CD8-positive, alpha-beta T cell (primary cell): ENCODE measurements at regions of chr4 and their contacts with region 1.

Region 1: DNA sequence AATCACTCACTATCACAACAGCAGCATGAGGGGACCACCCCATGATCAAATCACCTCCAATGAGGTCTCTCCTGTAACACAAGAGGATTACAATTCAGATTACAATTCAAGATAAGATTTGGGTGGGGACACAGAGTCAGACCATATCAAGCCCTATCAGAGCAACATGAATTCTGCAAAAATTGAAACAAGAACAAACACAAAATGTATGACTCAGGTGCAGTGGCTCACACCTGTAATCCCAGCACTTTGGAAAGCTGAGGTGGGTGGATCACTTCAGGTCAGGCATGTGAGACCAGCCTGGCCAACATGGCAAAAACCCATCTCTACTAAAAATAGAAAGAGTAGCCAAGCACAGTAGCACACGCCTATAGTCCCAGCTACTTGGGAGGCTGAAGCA is 13.4 kb upstream of the HPSE start:
- DNase-seq: no peak
- ATAC-seq: no peak
- H3K4me3 ChIP-seq: no peak overlapping the region
- H3K4me3 Mint-ChIP-seq: no peak overlapping the region
- H3K27ac ChIP-seq: no peak overlapping the region
- H3K27ac Mint-ChIP-seq: no peak overlapping the region
- H3K4me1 ChIP-seq: peaks cover 5% of the 10 kb centered on the region
- H3K4me1 Mint-ChIP-seq: peaks cover 12% of the 10 kb centered on the region
- H3K27me3 ChIP-seq: no peaks in the 10 kb centered on the region
- H3K27me3 Mint-ChIP-seq: peaks cover 3% of the 10 kb centered on the region
- CTCF ChIP-seq: no peak

Region 2: GRCh38 chr4:83334425-83335241 is 13.4 kb before region 1 on chr4 and contains the start of gene HPSE:
- CTCF ChIA-PET with region 1: no interaction called
- POLR2A ChIA-PET with region 1: no interaction called
- intact Hi-C with region 1: loop called in 1 of 2 experiments (anchors 2 kb)
- DNase-seq: peak; percentile 35 to 82 (median 71)
- ATAC-seq: peak; percentile 94
- H3K4me3 ChIP-seq: peak within 1 kb of the TSS; percentile 73 to 79
- H3K4me3 Mint-ChIP-seq: peak within 1 kb of the TSS; percentile 90
- H3K27ac ChIP-seq: peak within 1 kb of the TSS; percentile 48 to 70
- H3K27ac Mint-ChIP-seq: peak within 1 kb of the TSS; percentile 82
- H3K4me1 ChIP-seq: peaks cover 11% of the 10 kb centered on the region
- H3K4me1 Mint-ChIP-seq: peaks cover 31% of the 10 kb centered on the region
- H3K27me3 ChIP-seq: peaks cover 0 to 4% of the 10 kb centered on the region in 2 experiments
- H3K27me3 Mint-ChIP-seq: peaks cover 5% of the 10 kb centered on the region
- CTCF ChIP-seq: no peak
- total RNA-seq, gene HPSE: 1.1 to 1.3 TPM

Region 3: DNA sequence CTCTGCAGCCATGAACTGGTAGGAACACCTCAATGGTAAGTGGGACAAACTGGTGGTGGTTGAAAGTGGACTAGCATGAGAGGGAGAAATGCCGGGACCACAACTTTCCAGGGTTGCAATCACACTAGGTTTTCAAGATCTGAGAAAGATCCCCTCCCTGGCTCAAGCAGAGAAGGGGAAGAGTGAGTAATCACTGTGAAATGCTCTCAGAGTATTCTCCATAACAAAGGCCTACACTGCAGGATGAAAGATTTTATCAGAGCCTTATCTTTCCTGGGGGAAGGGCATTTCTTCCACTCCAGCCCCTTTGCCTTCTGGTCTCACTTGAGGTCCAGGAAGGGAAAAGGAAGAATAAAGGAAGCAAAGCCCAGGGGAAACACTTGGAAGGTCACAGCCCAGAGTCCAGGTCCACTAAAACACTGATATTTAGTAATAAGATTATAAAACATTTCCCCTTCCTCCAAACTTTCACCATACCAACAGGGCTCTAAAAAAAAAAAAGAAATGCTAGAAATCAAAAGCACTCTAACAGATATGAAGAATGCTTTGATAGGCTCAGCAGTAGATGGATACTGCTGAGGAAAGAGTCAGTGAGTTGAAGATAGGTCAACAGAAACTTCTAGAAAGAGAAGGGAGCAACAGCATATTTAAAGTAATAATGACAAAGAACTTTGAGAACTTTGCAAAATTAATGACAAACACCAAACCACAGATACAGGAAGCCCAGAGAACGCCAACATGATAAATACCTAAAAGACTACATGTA is 1522.5 kb after region 1 on chr4:
- CTCF ChIA-PET with region 1: no interaction called
- POLR2A ChIA-PET with region 1: no interaction called
- intact Hi-C with region 1: no loop called
- DNase-seq: no peak
- ATAC-seq: no peak
- H3K4me3 ChIP-seq: no peak overlapping the region
- H3K4me3 Mint-ChIP-seq: no peak overlapping the region
- H3K27ac ChIP-seq: no peak overlapping the region
- H3K27ac Mint-ChIP-seq: no peak overlapping the region
- H3K4me1 ChIP-seq: no peaks in the 10 kb centered on the region
- H3K4me1 Mint-ChIP-seq: no peaks in the 10 kb centered on the region
- H3K27me3 ChIP-seq: no peaks in the 10 kb centered on the region
- H3K27me3 Mint-ChIP-seq: no peaks in the 10 kb centered on the region
- CTCF ChIP-seq: no peak